ENCODE measurements at regions of chr15 and their contacts with region 1.

Region 1: DNA sequence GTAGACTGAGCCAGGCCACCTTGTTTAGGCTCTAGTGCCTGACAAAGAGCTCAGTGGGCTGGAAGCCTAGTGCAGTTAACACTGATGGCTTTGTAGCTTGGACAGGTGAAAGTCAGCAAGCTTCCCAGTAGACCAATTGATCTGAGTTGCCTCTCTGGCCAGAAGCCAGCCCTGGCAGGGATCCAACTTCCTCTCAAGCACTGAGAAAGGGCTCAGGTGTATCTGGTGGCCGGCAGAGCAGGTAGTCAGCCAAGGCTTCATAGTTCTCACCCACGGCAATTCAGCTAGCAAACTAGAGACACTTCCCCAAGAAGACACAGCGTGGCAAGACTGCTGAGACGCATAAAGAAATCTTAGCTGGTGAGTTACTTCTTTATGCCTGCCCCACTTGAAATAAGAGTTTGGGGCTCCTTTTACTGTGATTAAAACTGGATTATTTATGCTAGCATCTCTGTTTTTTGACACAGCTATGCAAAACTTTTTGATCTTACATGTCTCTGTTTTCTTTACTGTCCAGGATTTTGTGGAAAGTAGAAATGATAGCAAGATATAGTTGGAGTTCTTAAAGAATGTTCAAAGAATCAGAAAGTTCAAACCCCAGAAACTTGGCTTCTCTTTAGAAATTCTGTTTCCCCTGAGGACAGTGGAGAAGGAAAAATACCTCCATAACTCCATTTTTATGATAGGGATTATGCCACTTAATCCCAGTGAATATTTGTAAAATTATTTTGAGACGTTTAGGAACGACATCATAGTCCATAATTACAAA is 8.4 kb upstream of the CA12 start:
- DNase-seq: peak; percentile 65
- ATAC-seq: no peak

Region 2: GRCh38 chr15:63166219-63166618 is 223.9 kb before region 1 on chr15:
- intact Hi-C with region 1: loop called (anchors 10 kb)
- DNase-seq: no peak
- ATAC-seq: no peak

Region 3: GRCh38 chr15:63212050-63213004 is 177.8 kb before region 1 on chr15:
- intact Hi-C with region 1: no loop called
- DNase-seq: no peak
- ATAC-seq: peak; percentile 49

Region 4: DNA sequence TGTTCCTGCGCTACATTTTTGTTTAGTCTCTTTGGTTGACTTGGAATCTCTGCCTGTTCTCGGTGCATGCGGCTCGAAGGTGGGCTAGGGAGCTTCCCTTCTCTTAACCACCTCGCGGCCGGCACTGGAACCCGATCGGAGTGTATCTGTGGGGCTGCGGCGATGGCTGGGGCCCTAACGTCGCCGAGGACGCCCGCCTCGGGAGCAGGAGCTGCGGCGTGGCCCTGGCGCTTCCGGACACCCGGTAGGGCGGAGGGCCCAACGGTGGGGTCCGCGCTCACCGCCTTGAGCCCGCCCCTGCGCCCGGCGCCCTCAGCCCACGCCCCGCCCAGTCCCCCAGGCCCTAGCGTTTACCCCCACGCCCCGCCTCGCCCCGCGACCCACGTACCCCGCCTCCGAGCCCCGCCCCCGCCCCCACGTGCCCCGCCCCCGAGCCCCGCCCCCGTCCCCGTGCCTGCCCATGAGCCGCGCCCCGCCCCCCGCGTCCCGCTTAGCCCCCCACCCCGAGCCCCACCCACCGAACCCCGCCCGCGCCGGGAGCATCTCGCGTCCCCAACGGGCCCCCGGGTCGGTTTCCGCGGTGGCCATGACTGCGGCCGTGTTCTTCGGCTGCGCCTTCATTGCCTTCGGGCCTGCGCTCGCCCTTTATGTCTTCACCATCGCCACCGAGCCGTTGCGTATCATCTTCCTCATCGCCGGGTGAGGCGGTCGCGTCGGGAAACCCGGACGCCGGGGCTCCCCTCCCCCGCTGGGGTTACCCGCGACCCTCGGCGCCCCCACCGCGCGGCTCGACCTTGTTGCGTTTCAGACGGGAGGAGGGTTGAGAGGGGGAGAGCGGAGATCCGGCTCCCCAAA is 112.8 kb before region 1 on chr15 and contains the start of gene APH1B:
- intact Hi-C with region 1: no loop called
- DNase-seq: peak; percentile 91
- ATAC-seq: peak; percentile 96
- total RNA-seq, gene APH1B: 7.1 TPM